Activated CD8-positive, alpha-beta T cell treated with anti-CD3 and anti-CD28 coated beads, Interleukin-2, amount 10 ng/mL, durations not matched to agents 7 days and 5 days (primary cell): ENCODE measurements at regions of chr15 and their contacts with region 1.

Region 1: GRCh38 chr15:55846116-55846707 is 103.3 kb upstream of the PRTG start:
- DNase-seq: peak; percentile 74
- ATAC-seq: peak; percentile 44
- H3K4me3 Mint-ChIP-seq: no peak overlapping the region
- H3K27ac Mint-ChIP-seq: no peak overlapping the region
- H3K4me1 Mint-ChIP-seq: no peaks in the 10 kb centered on the region
- H3K27me3 Mint-ChIP-seq: no peaks in the 10 kb centered on the region

Region 2: DNA sequence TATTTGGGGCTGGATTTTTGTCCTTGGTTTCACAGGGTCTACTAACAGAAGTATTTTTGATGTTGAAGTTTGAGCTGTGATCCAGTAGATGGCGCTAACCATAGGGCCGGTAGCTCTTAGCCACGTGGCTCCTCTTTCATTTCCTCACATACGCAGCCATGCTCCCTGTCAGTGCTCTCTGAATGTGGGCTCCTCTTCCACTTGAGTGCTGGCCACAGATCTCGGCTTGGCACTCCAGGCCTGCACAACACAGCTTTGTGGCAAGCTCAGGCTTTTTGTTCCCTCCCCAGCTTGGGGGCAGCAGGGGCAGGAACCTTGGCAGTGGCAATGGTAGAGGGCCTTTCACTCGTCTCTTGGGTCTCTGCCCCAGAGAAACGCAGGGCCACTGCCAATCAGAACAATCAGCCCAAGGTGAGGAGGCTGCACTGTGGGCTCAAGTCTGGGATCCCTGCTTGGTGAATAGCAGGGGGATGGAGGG is 319.6 kb before region 1 on chr15:
- CTCF ChIA-PET with region 1: interaction called, 12 read pairs
- POLR2A ChIA-PET with region 1: no interaction called
- DNase-seq: peak; percentile 31
- ATAC-seq: peak; percentile 70
- H3K4me3 Mint-ChIP-seq: no peak overlapping the region
- H3K27ac Mint-ChIP-seq: no peak overlapping the region
- H3K4me1 Mint-ChIP-seq: peaks cover 2% of the 10 kb centered on the region
- H3K27me3 Mint-ChIP-seq: peaks cover 30% of the 10 kb centered on the region

Region 3: DNA sequence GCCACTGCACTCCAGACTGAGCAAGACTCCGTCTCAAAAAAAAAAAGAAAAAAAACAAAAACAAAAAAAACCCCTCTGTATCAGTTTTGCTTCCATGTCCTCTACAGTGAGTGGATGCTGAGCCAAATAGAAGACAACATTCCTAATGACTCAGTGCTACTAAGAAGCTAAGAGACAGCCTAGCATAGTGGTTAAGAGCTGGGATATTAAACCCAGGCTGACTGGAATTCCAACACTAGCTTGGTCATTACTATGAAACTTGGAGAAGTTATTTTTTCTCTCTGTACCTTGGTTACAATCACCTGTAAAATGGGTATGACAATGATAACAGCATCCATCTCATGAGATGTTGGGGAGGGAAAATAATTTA is 197.2 kb before region 1 on chr15:
- CTCF ChIA-PET with region 1: interaction called, 22 read pairs
- POLR2A ChIA-PET with region 1: no interaction called
- DNase-seq: no peak
- ATAC-seq: no peak
- H3K4me3 Mint-ChIP-seq: no peak overlapping the region
- H3K27ac Mint-ChIP-seq: no peak overlapping the region
- H3K4me1 Mint-ChIP-seq: no peaks in the 10 kb centered on the region
- H3K27me3 Mint-ChIP-seq: no peaks in the 10 kb centered on the region

Region 4: DNA sequence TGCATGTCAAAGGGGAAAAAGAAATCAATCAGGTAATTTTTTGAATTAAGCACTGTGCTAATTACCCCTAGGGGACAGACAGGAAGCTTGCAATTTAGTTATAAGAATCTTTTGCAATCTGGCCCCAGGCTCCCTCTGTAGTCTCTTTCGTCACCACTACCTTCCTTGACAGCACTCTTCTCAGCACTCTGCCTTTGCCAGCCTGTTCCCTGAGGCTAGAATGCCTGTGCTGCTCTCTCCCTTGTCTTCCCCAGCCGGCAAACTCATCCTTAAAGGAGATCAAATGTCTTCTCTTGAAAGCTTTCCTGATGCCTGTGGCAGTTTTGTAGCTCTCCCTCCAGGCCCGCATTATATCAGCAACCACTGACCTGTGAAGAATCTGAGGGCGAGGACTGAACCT is 70.9 kb before region 1 on chr15:
- CTCF ChIA-PET with region 1: interaction called, 13 read pairs
- POLR2A ChIA-PET with region 1: no interaction called
- DNase-seq: no peak
- ATAC-seq: no peak
- H3K4me3 Mint-ChIP-seq: no peak overlapping the region
- H3K27ac Mint-ChIP-seq: no peak overlapping the region
- H3K4me1 Mint-ChIP-seq: no peaks in the 10 kb centered on the region
- H3K27me3 Mint-ChIP-seq: peaks cover 12% of the 10 kb centered on the region

Region 5: DNA sequence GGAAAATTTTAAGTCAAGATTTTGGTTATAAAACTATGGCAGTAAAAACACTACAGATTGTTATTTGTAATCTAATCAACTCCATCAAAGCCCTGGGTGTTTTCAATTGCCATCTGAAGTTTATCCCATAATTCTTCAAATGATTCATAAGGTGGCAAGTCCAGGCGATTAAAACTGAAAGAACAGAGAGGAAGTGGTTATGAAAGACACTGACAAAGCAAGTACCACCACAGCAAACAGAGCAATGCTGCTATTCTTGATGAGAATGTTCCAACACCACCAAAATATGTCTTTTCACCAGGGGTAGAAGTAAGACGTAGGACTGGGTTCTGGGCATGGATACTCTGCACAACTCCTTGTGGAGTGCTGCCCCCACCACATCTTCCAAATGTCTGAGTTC is 16.4 kb before region 1 on chr15:
- CTCF ChIA-PET with region 1: interaction called, 17 read pairs
- POLR2A ChIA-PET with region 1: no interaction called
- DNase-seq: peak; percentile 38
- ATAC-seq: peak; percentile 83
- H3K4me3 Mint-ChIP-seq: peak overlapping the region; percentile 12
- H3K27ac Mint-ChIP-seq: peak overlapping the region; percentile 74
- H3K4me1 Mint-ChIP-seq: peaks cover 16% of the 10 kb centered on the region
- H3K27me3 Mint-ChIP-seq: no peaks in the 10 kb centered on the region

Region 6: GRCh38 chr15:55858661-55859060 is 12.4 kb after region 1 on chr15:
- CTCF ChIA-PET with region 1: interaction called, 14 read pairs
- POLR2A ChIA-PET with region 1: no interaction called
- DNase-seq: no peak
- ATAC-seq: no peak
- H3K4me3 Mint-ChIP-seq: no peak overlapping the region
- H3K27ac Mint-ChIP-seq: no peak overlapping the region
- H3K4me1 Mint-ChIP-seq: no peaks in the 10 kb centered on the region
- H3K27me3 Mint-ChIP-seq: no peaks in the 10 kb centered on the region